ENCODE measurements at regions of chr7 and their contacts with region 1.

Region 1: GRCh38 chr7:98211221-98211675 is at the start of gene BHLHA15:
- DNase-seq: peak; percentile 89 to 97 (median 94)
- ATAC-seq: peak; percentile 53 to 68 (median 58)
- H3K4me3 ChIP-seq: peak within 1 kb of the TSS; percentile 42 to 82 (median 60)
- H3K27ac ChIP-seq: peak within 1 kb of the TSS; percentile 88 to 94 (median 90)
- H3K4me1 ChIP-seq: peaks cover 4 to 11% (median 6%) of the 10 kb centered on the region in 3 donors
- H3K27me3 ChIP-seq: no peaks in the 10 kb centered on the region
- CTCF ChIP-seq: no peak
- total RNA-seq, gene BHLHA15: 70.9 to 405 (median 172) TPM

Region 2: DNA sequence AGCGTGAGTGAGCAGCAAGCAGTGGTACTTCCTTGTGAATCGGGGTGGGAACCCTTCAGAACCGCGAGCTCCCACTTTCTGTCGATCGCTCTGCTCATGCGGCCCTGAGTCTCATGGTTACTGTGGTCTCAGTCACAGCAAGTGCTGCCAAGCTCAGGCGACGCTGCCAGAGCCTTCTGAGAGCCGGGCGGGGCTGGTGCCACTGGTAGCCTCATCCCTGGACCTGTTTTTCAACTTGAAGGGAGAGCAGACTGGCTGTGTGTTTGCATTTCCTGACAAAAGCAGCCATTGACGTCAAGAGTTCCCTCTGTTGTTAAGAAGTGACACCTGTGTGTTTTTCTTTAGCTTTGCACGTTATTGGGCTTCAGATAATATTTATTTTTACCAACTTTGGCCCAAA is 32.9 kb before region 1 on chr7:
- intact Hi-C with region 1: loop called in 1 of 3 experiments (anchors 5 kb)
- DNase-seq: peak; percentile 85 to 96 (median 90)
- ATAC-seq: peak; percentile 78 to 88 (median 84)
- H3K4me3 ChIP-seq: peak overlapping the region in 2 of 4 donors; percentile 13 to 25
- H3K27ac ChIP-seq: peak overlapping the region; percentile 78 to 86 (median 82)
- H3K4me1 ChIP-seq: peaks cover 29 to 41% (median 33%) of the 10 kb centered on the region in 3 donors
- H3K27me3 ChIP-seq: no peaks in the 10 kb centered on the region
- CTCF ChIP-seq: no peak

Region 3: GRCh38 chr7:98591926-98592325 is 380.7 kb after region 1 on chr7:
- intact Hi-C with region 1: no loop called
- DNase-seq: no peak
- ATAC-seq: no peak
- H3K4me3 ChIP-seq: no peak overlapping the region
- H3K27ac ChIP-seq: no peak overlapping the region
- H3K4me1 ChIP-seq: no peaks in the 10 kb centered on the region
- H3K27me3 ChIP-seq: no peaks in the 10 kb centered on the region
- CTCF ChIP-seq: no peak

Measured in pancreas (tissue), 10 donors.